IMR-90 (cell line): ENCODE measurements at regions of chr13 and their contacts with region 1.

Region 1: DNA sequence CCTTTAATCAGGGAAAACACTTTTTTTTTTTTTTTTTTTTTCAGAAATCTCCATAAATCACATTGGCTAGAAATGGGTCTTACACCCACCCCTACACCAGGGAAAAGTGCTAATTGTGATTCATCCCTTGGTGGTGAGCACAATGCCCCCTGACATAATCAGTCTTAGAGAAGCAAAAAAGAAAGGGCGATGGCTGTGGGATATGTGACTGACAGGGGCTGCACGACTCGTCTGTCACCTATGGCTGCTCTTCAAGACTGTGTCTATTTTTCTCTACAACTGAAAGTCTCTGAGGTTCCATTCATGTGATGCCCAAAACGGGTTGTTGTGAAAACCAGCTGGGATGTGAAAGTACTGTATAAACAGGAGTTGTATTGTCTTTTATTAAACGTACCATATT is 3.6 kb upstream of the GPC6 start:
- DNase-seq: no peak
- ATAC-seq: no peak
- H3K4me3 ChIP-seq: no peak overlapping the region
- H3K27ac ChIP-seq: no peak overlapping the region
- H3K4me1 ChIP-seq: 0 out of 2 replicates have a peak, but pooled peaks cover 2% of the 10 kb centered on the region
- H3K27me3 ChIP-seq: no peaks in the 10 kb centered on the region
- CTCF ChIP-seq: no peak
- POLR2A ChIP-seq: no peak
- RAD21 ChIP-seq: no peak

Region 2: DNA sequence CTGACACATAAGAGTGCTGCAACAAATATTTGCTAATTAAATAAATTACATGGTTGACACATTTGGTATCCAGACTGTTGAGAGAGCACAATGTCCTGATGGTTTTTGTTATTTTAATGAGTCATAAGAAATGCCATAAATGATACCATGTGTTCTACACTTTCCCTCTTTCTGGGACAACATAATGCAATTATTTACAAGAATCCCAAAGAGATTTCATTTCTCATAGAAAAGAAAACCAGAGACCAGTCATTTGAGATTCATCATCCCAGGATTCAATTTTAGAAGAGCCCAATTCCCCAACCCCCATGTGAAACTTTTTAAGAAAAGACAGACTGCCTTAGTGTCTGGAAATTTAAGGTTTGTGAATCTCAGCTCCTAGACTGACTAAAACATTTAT is 856.9 kb after region 1 on chr13:
- CTCF ChIA-PET with region 1: no interaction called
- POLR2A ChIA-PET with region 1: interaction called, 13 read pairs
- dilution Hi-C with region 1: no loop called
- in situ Hi-C with region 1: no loop called
- intact Hi-C with region 1: no loop called
- DNase-seq: peak; percentile 54
- ATAC-seq: peak; percentile 40
- H3K4me3 ChIP-seq: no peak overlapping the region
- H3K27ac ChIP-seq: no peak overlapping the region
- H3K4me1 ChIP-seq: no peaks in the 10 kb centered on the region; the same call in 1 of the 2 replicates
- H3K27me3 ChIP-seq: no peaks in the 10 kb centered on the region
- CTCF ChIP-seq: no peak
- POLR2A ChIP-seq: no peak
- RAD21 ChIP-seq: no peak